Left colon (tissue), 2 donors: ENCODE measurements at regions of chr12 and their contacts with region 1.

Region 1: GRCh38 chr12:13362260-13362841 is 165.8 kb downstream of the EMP1 start:
- DNase-seq: peak; percentile 69 to 83
- ATAC-seq: peak; percentile 98

Region 2: DNA sequence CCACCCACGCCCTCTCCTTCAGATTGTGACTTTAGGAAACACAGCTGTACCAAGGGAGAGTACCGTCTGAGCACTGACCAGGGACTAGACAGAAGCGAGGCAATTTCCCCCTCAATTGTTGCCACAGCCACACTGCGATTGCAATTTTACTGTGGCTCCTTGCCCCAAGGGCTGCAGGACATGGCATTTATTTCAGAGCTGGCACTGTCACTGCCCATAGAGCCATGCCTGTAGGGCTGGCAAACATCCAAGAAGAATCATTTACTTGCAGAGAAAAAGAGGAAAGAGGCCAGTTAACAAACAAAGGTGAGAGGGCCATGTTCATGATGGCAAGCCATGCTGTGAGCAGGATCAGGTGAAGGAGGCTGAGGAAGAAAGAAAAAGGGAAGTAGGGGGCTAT is 36.3 kb before region 1 on chr12:
- intact Hi-C with region 1: no loop called
- DNase-seq: no peak
- ATAC-seq: no peak

Region 3: GRCh38 chr12:13404111-13404628 is 41.8 kb after region 1 on chr12:
- intact Hi-C with region 1: no loop called
- DNase-seq: no peak
- ATAC-seq: peak; percentile 45

Region 4: GRCh38 chr12:13652105-13652504 is 289.8 kb after region 1 on chr12:
- intact Hi-C with region 1: loop called in 1 of 2 experiments (anchors 10 kb)
- DNase-seq: no peak
- ATAC-seq: no peak